Posterior vena cava (tissue), 2 donors: ENCODE measurements at regions of chr12 and their contacts with region 1.

Region 1: GRCh38 chr12:32257695-32258496 is 141.5 kb upstream of the FGD4 start:
- DNase-seq: no peak

Region 2: DNA sequence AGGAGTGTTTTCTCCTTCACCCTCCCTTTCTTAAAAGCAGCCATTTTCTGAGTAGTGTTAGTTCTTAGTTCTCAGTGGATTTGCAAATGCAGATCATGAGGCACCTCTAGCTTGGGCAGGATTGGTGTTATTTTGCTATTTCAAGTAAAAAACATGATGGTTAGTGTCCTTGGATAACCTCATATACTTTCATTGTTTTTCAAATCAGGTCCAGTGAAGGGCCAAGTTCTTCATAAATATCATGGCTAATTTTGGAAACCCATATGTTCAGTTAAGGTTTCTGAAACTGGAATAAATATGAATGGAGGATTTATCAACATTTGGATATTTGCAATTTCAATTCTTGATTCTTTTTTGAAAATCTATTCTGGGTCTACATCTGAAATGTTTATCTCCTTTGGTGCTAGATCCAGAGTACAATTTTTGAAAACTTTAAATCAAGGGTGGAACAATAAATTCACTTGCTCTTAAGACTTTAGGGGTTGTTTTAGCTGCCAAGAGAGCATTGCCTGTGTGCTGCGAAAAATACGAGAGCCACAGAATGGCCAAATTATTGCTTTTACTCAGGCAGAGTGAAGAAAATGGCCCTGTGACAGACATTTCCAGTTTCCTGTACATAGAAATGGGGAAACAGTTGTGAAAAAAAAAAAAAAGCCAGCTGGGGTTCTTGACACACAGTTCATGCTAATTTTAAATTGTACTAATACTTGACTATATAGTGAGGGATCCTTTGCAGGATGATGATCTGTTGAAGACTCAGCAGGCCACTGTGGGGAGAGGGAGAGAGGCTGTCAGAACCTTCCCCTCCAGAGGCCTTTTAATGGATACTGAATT is 46.6 kb before region 1 on chr12:
- intact Hi-C with region 1: no loop called
- DNase-seq: no peak

Region 3: GRCh38 chr12:32296567-32296966 is 38.7 kb after region 1 on chr12:
- intact Hi-C with region 1: loop called in 1 of 2 experiments (anchors 5 kb)
- DNase-seq: no peak